Lower leg skin (tissue), 4 donors: ENCODE measurements at regions of chr3 and their contacts with region 1.

Region 1: DNA sequence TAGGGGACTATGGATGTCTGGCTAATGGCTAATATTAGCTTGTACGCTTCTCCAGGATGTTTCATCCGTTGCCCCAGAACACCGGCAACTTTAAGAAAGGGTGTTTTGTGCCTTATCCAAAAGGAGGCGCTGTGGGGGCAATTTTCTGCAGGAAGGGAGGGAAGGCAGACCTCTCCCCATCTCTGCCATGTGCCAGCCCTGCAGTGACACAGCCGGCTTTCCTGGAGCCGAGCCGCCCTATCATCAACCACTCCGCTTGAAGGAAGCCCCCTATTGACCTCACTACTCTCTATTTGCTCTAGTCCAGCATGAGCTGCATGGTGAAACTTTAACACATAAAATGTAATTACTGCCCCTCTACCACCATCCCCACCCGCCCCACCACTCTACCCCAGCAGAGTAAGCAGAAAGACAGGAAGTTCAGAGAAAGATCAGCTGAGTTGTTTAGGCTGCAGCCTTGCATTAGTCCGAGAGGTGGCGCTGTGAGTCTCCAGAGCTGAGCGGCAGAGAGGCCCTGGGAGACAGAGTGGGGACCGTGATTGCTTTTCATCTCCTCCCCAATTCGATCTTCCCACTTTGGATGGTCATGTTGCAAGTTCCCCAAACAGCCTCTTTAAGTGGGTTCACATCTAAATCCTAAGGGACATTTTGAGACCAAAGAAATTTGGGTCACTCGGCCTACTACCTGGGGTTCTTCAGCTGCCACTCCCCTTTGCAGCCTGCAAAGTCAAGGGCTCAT is 24.5 kb upstream of the RAD18 start:
- DNase-seq: peak; percentile 59 to 95
- H3K4me3 ChIP-seq: no peak overlapping the region
- CTCF ChIP-seq: peak in 1 of 3 donors; percentile 54
- POLR2A ChIP-seq: no peak

Region 2: DNA sequence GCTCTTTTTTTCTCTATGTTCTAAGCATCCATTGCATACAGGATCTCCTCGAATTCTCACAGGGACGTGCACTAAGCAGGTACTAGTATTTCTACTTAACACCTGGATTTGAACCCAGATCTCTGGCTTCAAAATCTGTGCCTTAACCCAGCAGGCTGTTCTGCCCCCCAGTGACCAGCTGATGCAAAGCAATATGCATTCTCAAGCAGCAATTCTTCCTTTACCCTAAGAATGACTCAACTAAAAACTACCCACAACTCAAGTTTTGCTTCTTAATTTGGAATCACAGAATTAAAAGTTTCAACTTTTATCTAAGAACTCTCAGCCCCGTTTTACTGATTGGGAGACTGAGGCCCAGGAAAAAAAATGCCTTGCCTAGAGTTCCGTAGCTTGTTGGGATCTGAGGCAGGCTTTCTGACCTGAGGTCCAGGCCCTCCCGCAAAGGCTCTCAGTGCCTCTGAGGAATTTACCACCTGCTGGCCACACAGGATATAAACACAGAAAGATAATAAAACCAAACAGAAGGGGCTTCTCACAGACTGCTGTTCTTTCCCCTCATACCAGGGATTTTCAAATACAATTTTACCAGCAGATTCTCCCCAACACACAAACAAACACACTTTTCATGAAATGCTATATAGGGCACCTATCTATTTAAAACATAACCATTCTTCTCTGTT is 90.9 kb after region 1 on chr3:
- intact Hi-C with region 1: loop called (anchors 10 kb)
- DNase-seq: peak in 1 of 2 donors; percentile 25
- H3K4me3 ChIP-seq: no peak overlapping the region
- CTCF ChIP-seq: no peak
- POLR2A ChIP-seq: no peak

Region 3: DNA sequence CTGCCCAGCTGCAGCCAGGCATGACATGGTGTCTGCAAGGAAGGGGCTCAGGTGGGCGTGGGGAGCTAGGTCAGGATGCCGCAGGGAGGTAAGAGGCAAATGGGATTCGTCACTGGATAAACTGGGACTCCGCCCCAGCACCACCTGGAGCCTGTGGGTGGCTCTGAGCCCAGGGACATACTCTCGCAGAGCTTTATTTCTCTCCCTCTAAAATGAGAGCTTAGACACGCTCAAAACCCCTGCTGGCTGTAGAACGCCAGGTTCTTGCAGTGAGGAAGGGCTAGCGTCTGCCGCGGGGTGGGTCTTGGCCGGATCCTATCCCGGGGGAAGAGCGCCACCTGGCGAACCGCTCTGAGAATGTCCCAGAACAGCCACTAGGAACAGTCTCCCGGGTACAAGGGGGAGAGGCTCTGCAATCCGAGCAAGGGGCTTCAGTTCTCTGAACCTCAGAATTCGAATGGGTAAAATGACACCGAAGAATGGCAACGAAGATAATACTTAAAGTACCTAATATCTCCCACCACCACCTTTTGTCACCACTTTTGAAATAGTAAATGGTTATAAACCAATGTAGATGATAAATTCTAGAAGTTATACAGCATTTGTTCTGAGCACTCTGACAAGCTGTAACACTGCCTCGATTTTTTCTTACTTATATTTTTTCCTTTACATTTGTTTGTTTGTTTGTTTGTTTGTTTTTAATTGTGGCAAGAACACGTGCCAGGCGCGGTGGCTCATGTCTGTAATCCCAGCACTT is 314.8 kb after region 1 on chr3:
- intact Hi-C with region 1: loop called (anchors 5 kb)
- DNase-seq: peak; percentile 54 to 95
- H3K4me3 ChIP-seq: no peak overlapping the region
- CTCF ChIP-seq: peak in 1 of 3 donors; percentile 68
- POLR2A ChIP-seq: no peak